GM12878 (cell line): ENCODE measurements at regions of chr5 and their contacts with region 1.

Region 1: DNA sequence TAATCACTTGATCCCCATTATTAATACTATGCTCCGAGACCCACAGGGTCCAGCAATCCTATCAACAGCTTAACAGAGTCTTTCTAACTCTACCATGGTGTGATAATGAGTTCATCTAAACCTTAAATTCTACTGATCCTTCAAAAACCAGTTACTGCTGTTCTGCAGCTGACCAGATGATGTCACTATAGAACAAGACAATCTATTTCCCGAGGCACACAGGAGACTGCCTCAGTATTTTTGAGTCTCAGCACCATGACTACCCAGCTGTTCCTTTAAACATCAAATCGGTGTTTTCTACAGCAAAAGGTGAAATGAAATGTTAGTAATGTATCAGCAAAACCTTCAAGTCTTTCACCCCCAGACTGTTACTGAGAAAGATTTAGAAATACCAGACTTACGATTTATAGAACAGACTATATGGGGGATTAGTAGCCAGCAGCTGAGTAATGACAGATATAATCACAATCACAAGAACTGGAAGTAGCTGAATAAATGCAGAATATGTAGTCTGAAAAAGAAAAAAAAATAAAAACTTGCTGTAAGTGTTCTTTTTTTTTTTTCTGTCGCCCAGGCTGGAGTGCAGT is 16.9 kb downstream of the DNAJC18 start:
- DNase-seq: no peak
- ATAC-seq: peak; percentile 95
- H3K4me3 ChIP-seq: no peak overlapping the region
- H3K27ac ChIP-seq: no peak overlapping the region
- H3K4me1 ChIP-seq: no peaks in the 10 kb centered on the region
- H3K27me3 ChIP-seq: no peaks in the 10 kb centered on the region
- CTCF ChIP-seq: peak; percentile 85 to 95 (median 94)
- EP300 ChIP-seq: no peak
- POLR2A ChIP-seq: no peak
- RAD21 ChIP-seq: peak; percentile 99

Region 2: DNA sequence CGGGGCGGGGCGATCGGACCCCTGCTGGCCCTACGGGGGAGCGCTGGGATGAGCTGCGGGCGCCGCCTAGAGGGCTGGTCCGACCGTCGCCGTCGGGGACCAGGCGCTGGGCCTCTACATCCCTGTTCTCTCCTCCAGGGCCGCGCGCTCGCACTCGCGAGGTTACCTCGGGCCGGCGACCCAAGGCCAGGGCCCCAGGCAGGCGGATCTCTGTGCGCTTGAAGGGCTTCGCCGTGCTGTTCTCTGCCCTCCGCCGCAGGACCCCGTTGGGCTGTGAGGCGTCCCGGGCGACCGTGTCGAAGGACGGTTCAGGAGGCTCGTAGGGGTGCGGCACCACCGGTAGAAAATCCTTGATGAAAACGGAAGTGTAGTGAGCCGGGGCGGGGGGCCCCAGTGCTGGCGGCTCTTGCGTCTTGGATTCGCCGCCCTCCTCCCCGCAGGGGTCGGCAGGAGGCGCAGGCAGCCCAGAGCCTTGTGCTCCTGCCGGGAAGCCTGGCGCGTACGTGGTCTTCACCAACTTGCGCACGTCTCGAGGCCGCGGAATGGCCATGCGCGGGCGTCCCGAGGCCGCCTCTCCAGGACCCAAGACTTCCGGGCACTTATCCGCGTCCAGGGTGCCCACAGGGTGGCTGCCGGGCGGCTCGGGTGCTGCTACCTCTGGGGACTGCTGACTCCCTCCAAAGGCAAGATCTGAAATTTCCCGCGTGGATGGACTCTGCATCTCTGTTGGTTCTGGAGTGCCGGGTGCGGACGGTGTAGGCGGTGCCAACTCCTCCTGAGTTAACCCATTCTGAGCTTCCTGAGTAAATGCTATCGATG is 29.5 kb before region 1 on chr5:
- CTCF ChIA-PET with region 1: interaction called, 10 read pairs
- POLR2A ChIA-PET with region 1: interaction called, 3 read pairs
- RAD21 ChIA-PET with region 1: interaction called, 14 read pairs
- SMC1A ChIA-PET with region 1: interaction called, 15 read pairs
- in situ Hi-C with region 1: no loop called
- intact Hi-C with region 1: no loop called
- DNase-seq: no peak
- ATAC-seq: peak; percentile 69
- H3K4me3 ChIP-seq: peak overlapping the region; percentile 87
- H3K27ac ChIP-seq: peak overlapping the region; percentile 90
- H3K4me1 ChIP-seq: peaks cover 49% of the 10 kb centered on the region
- H3K27me3 ChIP-seq: no peaks in the 10 kb centered on the region
- CTCF ChIP-seq: peak; percentile 89 to 98 (median 90)
- EP300 ChIP-seq: no peak
- POLR2A ChIP-seq: no peak
- RAD21 ChIP-seq: peak; percentile 76

Region 3: DNA sequence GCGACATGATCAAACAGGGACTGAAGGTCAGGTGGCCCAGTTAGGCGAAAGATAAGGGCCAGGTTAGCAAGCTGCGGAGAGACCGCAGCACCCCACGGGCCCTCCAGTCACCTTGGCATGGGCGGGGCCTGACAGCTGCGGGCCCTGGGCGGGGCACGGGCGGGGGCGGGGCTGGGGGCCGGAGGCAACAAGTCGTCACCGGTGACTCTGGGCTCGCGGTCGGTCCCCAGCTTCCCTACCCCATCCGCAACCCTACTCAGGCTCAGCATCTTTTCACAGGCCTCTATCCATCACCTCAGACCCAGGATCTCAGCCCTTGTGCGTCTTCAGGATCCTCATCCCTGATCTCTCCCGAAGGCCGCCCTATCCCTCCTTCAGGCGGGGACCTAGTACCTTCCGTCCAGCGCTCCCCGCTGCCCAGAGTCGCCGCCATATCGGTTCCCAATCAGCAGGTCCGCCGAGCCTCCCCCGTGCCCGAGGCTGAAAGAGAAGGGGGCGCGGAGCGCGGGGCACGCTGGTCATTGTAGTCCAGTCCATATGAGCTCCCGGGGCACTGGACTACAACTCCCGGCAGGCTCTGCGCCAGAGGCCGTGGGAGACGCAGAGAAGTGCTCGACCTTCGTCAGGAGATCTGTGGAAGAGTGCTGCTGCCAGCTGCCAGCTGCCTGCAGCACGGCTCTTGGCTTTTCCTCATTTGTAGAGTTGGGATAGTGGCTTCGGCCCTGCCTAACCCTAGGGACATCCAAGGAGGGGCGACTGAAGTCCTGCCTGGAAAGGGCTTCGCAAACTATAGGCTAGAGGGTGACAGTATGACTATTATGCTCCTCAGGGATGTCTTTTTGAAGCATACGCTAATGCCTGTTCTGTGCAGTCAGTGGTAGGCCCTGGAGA is 16.9 kb after region 1 on chr5 and contains the start of gene DNAJC18:
- CTCF ChIA-PET with region 1: interaction called, 83 read pairs
- POLR2A ChIA-PET with region 1: interaction called, 9 read pairs
- RAD21 ChIA-PET with region 1: interaction called, 19 read pairs
- SMC1A ChIA-PET with region 1: interaction called, 61 read pairs
- in situ Hi-C with region 1: no loop called
- intact Hi-C with region 1: no loop called
- DNase-seq: peak; percentile 53
- ATAC-seq: peak; percentile 81
- H3K4me3 ChIP-seq: peak within 1 kb of the TSS; percentile 84
- H3K27ac ChIP-seq: peak within 1 kb of the TSS; percentile 95
- H3K4me1 ChIP-seq: peaks cover 24% of the 10 kb centered on the region
- H3K27me3 ChIP-seq: no peaks in the 10 kb centered on the region
- CTCF ChIP-seq: no peak
- EP300 ChIP-seq: no peak
- POLR2A ChIP-seq: peak; percentile 74
- RAD21 ChIP-seq: 0 out of 2 replicates have a peak, but pooled peaks have one; percentile 3
- polyA plus RNA-seq, gene DNAJC18: 20.5 to 26.7 TPM

Region 4: DNA sequence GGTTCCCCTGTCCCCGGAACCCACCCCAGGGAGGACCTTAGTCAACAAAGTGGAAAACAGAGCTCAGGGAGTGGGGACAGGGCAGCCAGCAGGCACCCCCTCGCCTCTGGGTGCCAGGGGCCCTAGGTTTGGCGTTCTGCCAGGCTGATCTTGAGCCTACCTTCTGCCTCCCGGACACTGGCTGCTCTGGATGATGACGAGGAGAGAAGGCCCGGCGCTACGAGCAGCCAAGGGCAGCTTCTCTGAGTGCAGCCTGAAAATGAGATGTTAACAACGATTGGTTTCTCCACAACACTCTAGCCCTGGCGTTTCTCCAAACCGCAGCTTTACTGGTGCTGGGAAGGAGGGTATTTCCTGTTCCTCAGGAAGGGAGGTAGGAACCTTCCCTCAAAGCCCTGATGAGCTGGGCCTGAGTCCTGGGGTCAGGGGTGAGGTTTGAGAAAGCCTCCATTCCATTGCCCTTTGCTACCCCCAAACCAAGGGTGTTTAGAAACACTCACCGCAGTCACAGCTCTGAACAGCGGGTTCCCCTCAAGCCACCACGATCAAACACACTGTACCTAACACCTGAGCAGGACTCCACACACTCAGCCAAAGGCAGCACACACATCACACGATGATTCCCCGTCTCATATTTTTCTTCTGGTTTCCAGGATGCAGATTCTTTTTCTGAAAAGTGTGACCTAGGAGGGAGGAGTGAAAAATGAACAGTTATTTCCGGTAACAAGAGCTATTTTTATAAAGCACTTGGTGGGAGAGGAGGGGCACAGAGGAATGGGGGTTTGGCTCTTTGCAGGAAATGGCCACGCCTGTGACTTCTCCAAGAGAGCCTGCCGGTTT is 59.9 kb after region 1 on chr5 and contains the start of gene STING1:
- CTCF ChIA-PET with region 1: interaction called, 24 read pairs
- POLR2A ChIA-PET with region 1: interaction called, 3 read pairs
- RAD21 ChIA-PET with region 1: interaction called, 12 read pairs
- SMC1A ChIA-PET with region 1: interaction called, 25 read pairs
- in situ Hi-C with region 1: no loop called
- intact Hi-C with region 1: no loop called
- DNase-seq: peak; percentile 41
- ATAC-seq: peak; percentile 75
- H3K4me3 ChIP-seq: peak within 1 kb of the TSS; percentile 59
- H3K27ac ChIP-seq: peak within 1 kb of the TSS; percentile 91
- H3K4me1 ChIP-seq: peaks cover 27% of the 10 kb centered on the region
- H3K27me3 ChIP-seq: no peaks in the 10 kb centered on the region
- CTCF ChIP-seq: no peak
- EP300 ChIP-seq: no peak
- POLR2A ChIP-seq: peak; percentile 29
- RAD21 ChIP-seq: no peak
- polyA plus RNA-seq, gene STING1: 10.1 to 12.1 TPM

Region 5: GRCh38 chr5:139524932-139525585 is 102.7 kb after region 1 on chr5:
- CTCF ChIA-PET with region 1: interaction called, 491 read pairs
- POLR2A ChIA-PET with region 1: no interaction called
- RAD21 ChIA-PET with region 1: interaction called, 17 read pairs
- SMC1A ChIA-PET with region 1: interaction called, 235 read pairs
- in situ Hi-C with region 1: no loop called
- intact Hi-C with region 1: no loop called
- DNase-seq: no peak
- ATAC-seq: peak; percentile 88
- H3K4me3 ChIP-seq: 0 out of 2 replicates have a peak overlapping the region, but pooled peaks have one; percentile 2
- H3K27ac ChIP-seq: peak overlapping the region; percentile 59
- H3K4me1 ChIP-seq: peaks cover 28% of the 10 kb centered on the region
- H3K27me3 ChIP-seq: no peaks in the 10 kb centered on the region
- CTCF ChIP-seq: no peak
- EP300 ChIP-seq: 0 out of 4 replicates have a peak, but pooled peaks of 1 of the 2 experiments have one; percentile 24
- POLR2A ChIP-seq: no peak
- RAD21 ChIP-seq: no peak

Region 6: DNA sequence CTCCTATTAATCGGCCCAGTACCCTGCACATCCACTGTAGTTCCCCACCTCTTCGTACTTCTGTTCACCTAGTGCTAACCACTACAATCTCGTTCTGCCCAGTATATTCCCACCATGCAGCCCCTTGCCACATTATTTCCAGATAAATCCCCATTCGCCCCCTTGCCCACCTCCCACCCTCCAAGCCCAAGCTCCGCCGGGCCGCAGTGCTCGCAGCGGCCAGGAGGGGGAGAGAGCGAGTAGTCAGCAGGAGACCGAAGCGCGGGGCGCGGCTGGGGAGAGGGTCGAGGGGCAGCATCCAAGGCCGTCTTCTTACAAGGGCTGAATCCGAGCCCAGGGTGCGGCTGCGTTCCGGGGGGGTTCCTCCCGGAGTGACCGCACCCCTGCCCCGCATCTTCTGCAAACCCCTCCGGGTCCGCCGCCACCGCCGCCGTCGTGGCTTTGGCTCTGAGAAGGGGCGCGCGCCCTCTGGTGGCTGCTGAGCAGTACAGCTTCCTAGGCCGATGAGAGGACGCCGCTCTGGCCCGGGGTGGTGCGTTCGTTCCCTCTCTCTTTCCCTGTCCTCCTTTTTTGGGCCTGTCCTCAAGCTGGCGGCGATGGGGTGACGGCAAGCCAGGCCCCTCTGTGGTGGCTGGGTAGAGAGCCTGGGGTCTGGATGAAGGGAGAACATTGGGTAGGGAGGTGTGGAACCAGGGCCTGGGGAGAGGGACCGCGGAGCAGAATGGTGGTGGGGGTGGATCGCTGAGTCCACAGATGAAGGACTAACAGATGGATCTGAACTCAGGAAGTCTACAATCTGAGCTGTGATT is 343.2 kb after region 1 on chr5:
- CTCF ChIA-PET with region 1: interaction called, 7 read pairs
- POLR2A ChIA-PET with region 1: no interaction called
- RAD21 ChIA-PET with region 1: interaction called, 3 read pairs
- SMC1A ChIA-PET with region 1: interaction called, 4 read pairs
- in situ Hi-C with region 1: no loop called
- intact Hi-C with region 1: loop called (anchors 5 kb)
- DNase-seq: no peak
- ATAC-seq: peak; percentile 94
- H3K4me3 ChIP-seq: peak overlapping the region; percentile 71; the same call in 1 of the 2 replicates
- H3K27ac ChIP-seq: no peak overlapping the region
- H3K4me1 ChIP-seq: no peaks in the 10 kb centered on the region
- H3K27me3 ChIP-seq: peaks cover 11 to 14% of the 10 kb centered on the region in 2 experiments
- CTCF ChIP-seq: peak; percentile 57 to 93 (median 86)
- EP300 ChIP-seq: no peak
- POLR2A ChIP-seq: no peak
- RAD21 ChIP-seq: peak; percentile 77